ENCODE measurements at regions of chr21 and their contacts with region 1.

Region 1: DNA sequence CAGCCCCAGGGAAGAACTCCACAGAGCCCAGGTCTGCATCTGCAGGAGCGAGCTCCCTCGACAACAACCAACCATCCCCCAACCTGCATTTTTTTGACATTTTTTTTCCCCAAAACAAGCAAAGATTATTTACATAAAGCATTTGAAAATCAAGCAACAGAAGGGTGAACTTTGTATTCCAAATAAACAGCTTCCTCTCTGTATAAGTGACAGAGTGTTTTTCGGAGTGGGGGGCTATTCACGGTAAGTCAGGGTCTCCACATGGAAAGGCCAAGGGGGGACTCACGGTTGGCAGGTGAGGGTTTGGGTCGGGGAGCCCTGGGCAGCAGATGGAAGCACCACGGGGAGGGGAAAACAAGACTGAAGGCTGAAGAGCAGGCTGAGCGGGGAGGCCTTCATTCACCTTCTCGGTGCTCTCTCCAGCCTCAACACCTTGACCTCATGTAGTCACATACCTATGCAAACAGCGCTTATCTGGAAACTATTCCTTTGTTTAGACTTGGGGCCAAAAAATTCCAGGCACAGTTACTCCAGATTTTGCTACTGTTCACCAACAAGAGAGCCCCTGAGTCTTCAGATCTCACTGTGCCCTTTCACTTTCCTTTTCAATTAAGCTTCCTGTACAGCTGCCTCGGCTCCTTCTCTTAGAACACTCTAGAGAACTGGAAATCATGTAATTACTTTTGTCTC is 27.6 kb downstream of the C2CD2 start:
- DNase-seq: peak; percentile 17
- H3K4me3 Mint-ChIP-seq: peak overlapping the region; percentile 86
- H3K27ac Mint-ChIP-seq: peak overlapping the region; percentile 93
- H3K4me1 Mint-ChIP-seq: peaks cover 52% of the 10 kb centered on the region
- H3K27me3 Mint-ChIP-seq: no peaks in the 10 kb centered on the region

Region 2: DNA sequence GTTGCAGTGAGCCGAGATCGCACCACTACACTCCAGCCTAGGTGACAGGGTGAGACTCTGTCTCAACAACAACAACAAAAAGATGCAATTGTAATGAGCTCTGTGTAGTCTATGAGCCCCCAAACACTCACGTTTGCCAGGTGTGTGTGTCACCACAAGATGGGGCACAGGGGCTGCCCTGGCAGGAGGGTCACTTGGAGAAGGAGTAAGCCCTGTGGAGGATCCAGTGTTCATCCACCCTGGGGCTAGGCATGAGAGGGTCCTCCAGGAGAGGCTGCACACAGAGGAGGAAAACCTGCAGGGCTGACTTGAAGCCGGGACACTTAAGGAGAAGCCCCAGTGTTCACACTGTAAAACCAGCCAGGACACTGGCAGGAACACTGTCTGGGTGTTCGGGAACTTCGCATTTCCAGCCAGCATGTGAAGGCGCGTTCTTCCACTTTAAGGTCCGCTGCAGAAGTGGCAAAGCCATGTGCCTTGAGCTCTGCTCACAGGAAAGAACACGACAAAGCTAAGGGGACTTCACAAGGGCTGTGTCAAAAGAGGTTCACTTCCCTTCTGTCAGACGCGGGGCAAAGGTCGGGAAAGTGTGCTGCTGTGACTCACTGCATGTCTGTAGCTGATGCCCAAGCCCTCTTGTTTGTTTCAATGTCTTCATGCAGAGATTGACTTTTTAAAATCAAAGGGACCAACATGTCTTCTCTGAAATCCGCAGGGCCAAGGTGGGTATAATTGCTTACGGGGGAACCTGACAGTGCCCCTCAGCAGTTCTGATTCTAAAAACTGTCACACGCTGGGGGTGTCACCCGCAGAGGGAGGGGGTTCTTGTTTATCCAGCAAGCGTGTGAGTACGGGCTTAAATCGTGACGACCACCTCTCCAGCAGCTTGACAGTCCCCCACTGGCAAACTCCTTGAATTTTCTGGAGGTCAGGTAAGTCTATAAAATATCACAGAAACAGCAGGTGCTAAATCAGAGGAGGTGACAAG is 262.2 kb before region 1 on chr21:
- intact Hi-C with region 1: no loop called
- DNase-seq: no peak
- H3K4me3 Mint-ChIP-seq: no peak overlapping the region
- H3K27ac Mint-ChIP-seq: no peak overlapping the region
- H3K4me1 Mint-ChIP-seq: no peaks in the 10 kb centered on the region
- H3K27me3 Mint-ChIP-seq: no peaks in the 10 kb centered on the region

Region 3: GRCh38 chr21:41899426-41900202 is 26.6 kb before region 1 on chr21:
- intact Hi-C with region 1: loop called (anchors 2 kb)
- DNase-seq: peak; percentile 33
- H3K4me3 Mint-ChIP-seq: peak overlapping the region; percentile 26
- H3K27ac Mint-ChIP-seq: peak overlapping the region; percentile 87
- H3K4me1 Mint-ChIP-seq: peaks cover 35% of the 10 kb centered on the region
- H3K27me3 Mint-ChIP-seq: no peaks in the 10 kb centered on the region

Region 4: GRCh38 chr21:42135386-42136052 is 209.3 kb after region 1 on chr21:
- intact Hi-C with region 1: no loop called
- DNase-seq: no peak
- H3K4me3 Mint-ChIP-seq: no peak overlapping the region
- H3K27ac Mint-ChIP-seq: no peak overlapping the region
- H3K4me1 Mint-ChIP-seq: peaks cover 3% of the 10 kb centered on the region
- H3K27me3 Mint-ChIP-seq: no peaks in the 10 kb centered on the region

Measured in activated T-helper 2 cell treated with anti-CD3 and anti-CD28 coated beads, Interferon-gamma antibody, Interleukin-2, Interleukin-4, amounts not matched to agents 10 μg/mL and 5 μg/mL and 100 μg/mL, durations not matched to agents 14 hours and 24 hours and 36 hours (primary cell).